SK-N-SH (cell line): ENCODE measurements at regions of chr6 and their contacts with region 1.

Region 1: DNA sequence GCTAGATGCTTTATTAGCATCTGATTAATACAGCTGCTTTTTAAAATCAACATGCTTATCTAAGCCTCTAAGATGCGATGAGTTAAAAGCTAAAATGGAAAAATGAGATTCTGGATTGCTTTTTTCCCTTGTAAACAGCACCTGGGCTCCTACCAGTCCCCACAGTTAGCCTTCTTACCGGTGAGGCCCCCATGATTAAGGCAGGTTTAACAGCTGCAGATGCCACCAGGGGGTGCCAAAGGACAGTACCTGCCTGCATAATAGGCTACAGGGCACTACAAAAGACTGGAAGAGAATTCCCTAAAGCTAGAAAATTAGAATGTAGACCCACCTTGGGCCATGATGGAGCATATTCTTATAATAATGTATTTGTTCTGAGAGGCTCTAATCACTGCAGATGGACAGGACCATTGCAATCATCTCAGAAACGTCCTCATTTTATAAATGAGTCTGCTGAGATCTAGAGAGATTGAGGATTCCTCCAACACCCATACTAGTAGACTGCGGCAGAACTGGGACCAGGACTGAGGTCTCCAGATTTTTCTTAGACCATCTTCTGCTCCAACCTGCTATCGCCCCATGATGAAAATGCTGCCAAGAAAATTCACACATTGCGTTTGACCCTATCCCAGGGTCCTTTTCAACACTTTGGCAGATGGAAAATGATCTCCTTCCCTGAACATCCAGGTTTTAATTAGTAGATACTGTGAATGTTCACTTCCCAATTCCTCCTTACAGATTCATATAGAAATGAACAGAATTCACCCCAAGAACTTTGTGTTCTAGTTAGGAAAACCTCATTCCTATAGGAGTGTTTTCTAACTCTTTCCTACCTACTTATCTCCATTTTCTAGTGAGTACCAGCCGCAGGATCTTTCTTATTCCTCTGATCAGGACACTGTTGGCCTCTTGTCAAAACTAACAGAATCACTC is 148.8 kb downstream of the RPS12 start:
- DNase-seq: peak; percentile 51
- H3K4me3 ChIP-seq: no peak overlapping the region
- H3K27ac ChIP-seq: peak overlapping the region in 1 of 2 experiments; percentile 73; a peak in 2 of 4 replicates
- H3K4me1 ChIP-seq: peaks cover 0 to 13% of the 10 kb centered on the region in 2 experiments; a peak in 2 of 4 replicates
- H3K27me3 ChIP-seq: no peaks in the 10 kb centered on the region
- CTCF ChIP-seq: peak; percentile 84
- EP300 ChIP-seq: no peak
- RAD21 ChIP-seq: peak; percentile 90

Region 2: DNA sequence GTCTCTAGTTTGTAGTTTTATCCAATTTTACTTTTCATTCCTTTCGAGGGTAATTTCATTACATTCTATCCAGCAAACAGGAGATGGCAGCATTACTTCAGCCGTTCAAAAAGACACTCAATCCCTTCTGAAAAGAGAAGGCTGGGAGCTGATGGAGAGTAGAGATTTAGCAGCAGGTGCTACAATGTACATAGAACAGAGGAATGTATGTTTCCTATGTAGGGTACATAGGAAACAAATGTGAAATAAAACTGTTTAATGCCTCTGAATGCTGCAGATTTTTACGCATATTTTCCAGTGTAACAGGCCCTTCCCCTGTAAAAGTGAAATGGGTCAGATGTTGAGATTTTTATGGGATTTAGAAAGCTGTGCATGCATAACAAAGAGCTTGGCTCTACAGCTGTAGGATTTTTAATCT is 132.9 kb before region 1 on chr6:
- CTCF ChIA-PET with region 1: interaction called, 38 read pairs
- POLR2A ChIA-PET with region 1: no interaction called
- DNase-seq: peak; percentile 57
- H3K4me3 ChIP-seq: no peak overlapping the region; a peak in 1 of 4 replicates
- H3K27ac ChIP-seq: no peak overlapping the region
- H3K4me1 ChIP-seq: no peaks in the 10 kb centered on the region; a peak in 1 of 4 replicates
- H3K27me3 ChIP-seq: no peaks in the 10 kb centered on the region
- CTCF ChIP-seq: peak; percentile 63
- EP300 ChIP-seq: no peak
- RAD21 ChIP-seq: peak; percentile 94

Region 3: DNA sequence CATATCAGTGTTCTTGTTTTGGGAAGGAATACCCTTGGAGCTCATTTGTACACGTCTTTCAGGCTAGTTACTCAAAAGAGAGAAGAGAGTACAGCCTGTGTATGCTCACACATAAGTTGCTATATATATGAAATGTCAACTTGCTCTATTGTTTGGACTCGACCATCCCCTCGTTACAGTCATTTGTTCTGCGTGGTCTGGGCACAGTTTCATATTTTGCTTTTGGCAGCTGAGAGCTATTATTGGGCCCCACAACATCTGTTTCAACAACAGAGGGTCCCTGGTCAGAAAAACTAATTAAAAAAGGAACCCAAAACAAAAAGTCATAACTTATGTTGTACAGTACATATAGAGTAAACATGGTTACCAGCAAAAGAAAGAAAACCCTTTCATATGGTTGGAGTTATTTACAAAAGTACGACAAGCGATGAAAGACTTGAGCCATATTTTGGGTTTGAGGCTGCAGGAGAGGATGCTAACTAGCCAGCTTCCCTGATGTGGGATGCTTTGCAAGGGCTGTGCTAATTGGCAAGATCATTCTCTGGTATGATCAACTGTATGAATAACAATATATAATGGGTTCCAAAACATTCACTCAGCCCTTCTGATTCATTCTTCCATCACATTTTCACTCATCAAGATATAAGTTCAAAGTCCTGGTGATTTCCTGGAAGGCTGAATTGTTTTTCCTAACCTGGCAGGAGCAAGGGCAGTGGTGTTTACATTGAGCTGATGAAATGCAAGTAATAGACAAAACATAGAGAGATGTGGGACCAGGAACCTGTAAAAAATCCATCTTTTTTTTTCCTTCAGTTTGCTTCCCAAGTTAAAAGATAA is 11.0 kb before region 1 on chr6:
- CTCF ChIA-PET with region 1: interaction called, 16 read pairs
- POLR2A ChIA-PET with region 1: no interaction called
- DNase-seq: no peak
- H3K4me3 ChIP-seq: no peak overlapping the region
- H3K27ac ChIP-seq: no peak overlapping the region
- H3K4me1 ChIP-seq: no peaks in the 10 kb centered on the region
- H3K27me3 ChIP-seq: no peaks in the 10 kb centered on the region
- CTCF ChIP-seq: no peak
- EP300 ChIP-seq: no peak
- RAD21 ChIP-seq: no peak

Region 4: DNA sequence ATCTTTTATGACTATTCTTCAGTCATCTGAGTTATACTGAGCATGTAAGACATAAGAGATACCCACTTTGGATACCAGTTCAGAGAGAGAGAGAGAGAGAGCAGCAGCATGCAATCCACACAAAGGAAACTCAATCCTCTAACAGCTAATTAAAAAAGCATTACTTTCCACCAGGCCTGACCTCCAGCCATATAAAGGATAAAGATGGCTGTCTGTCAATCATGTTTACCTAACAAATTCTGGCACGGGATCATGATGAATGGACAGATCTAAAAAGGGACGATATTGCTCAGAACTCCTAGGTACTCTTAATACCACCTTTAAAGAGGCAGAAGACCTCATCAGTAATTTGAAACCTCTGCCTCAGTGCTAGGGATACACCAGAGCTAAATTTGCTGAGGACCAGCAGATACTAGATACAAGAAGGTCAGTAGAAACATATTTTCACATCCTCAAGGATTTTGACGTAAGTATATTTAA is 10.4 kb after region 1 on chr6:
- CTCF ChIA-PET with region 1: interaction called, 23 read pairs
- POLR2A ChIA-PET with region 1: no interaction called
- DNase-seq: peak; percentile 3
- H3K4me3 ChIP-seq: no peak overlapping the region
- H3K27ac ChIP-seq: no peak overlapping the region
- H3K4me1 ChIP-seq: peaks cover 0 to 2% of the 10 kb centered on the region in 2 experiments; a peak in 2 of 4 replicates
- H3K27me3 ChIP-seq: no peaks in the 10 kb centered on the region
- CTCF ChIP-seq: no peak
- EP300 ChIP-seq: no peak
- RAD21 ChIP-seq: no peak

Region 5: DNA sequence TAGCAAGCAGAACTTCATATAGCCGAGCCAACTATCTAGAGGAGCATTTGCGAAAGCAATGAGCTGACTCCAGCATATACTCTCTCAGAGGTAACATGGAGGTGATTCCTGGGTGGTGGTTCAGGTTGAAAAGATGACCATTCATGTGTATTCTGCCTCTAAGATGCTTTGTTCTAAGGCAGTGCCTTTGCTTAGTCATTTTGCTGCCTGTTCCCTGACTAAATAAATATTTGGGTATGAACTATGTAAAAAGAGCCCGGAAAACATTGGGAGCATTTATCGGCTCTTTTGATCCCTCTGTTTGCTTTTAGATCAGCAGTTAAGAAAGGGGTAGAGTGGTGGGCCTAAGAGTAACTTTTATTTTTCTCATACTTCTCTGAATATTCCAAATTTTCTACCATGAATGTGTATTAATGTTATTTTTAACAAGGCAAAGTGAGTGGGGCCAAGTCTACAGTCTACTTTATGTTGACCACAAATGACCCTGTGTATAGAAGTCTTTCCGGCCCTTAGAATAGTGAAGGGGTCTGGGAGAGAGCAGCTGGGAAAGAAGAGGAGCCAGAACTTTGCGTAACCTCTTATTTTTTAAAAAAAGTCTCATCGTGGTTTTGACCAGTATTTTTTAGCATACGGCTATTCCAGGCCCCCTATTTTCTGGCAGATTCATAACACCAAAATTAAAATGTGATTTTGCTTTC is 71.5 kb after region 1 on chr6:
- CTCF ChIA-PET with region 1: no interaction called
- POLR2A ChIA-PET with region 1: no interaction called
- DNase-seq: no peak
- H3K4me3 ChIP-seq: no peak overlapping the region
- H3K27ac ChIP-seq: no peak overlapping the region
- H3K4me1 ChIP-seq: no peaks in the 10 kb centered on the region
- H3K27me3 ChIP-seq: no peaks in the 10 kb centered on the region
- CTCF ChIP-seq: no peak
- EP300 ChIP-seq: no peak
- RAD21 ChIP-seq: no peak

Region 6: GRCh38 chr6:133070410-133071043 is 107.3 kb after region 1 on chr6:
- CTCF ChIA-PET with region 1: no interaction called
- POLR2A ChIA-PET with region 1: no interaction called
- DNase-seq: no peak
- H3K4me3 ChIP-seq: no peak overlapping the region
- H3K27ac ChIP-seq: no peak overlapping the region
- H3K4me1 ChIP-seq: no peaks in the 10 kb centered on the region
- H3K27me3 ChIP-seq: no peaks in the 10 kb centered on the region
- CTCF ChIP-seq: no peak
- EP300 ChIP-seq: no peak
- RAD21 ChIP-seq: no peak

Region 7: GRCh38 chr6:133184798-133185372 is 221.7 kb after region 1 on chr6:
- CTCF ChIA-PET with region 1: interaction called, 15 read pairs
- POLR2A ChIA-PET with region 1: no interaction called
- DNase-seq: no peak
- H3K4me3 ChIP-seq: no peak overlapping the region
- H3K27ac ChIP-seq: no peak overlapping the region
- H3K4me1 ChIP-seq: peaks cover 0 to 3% of the 10 kb centered on the region in 2 experiments; a peak in 2 of 4 replicates
- H3K27me3 ChIP-seq: no peaks in the 10 kb centered on the region
- CTCF ChIP-seq: peak; percentile 78
- EP300 ChIP-seq: no peak
- RAD21 ChIP-seq: peak; percentile 65

Region 8: GRCh38 chr6:133254552-133255228 is 291.5 kb after region 1 on chr6:
- CTCF ChIA-PET with region 1: no interaction called
- POLR2A ChIA-PET with region 1: no interaction called
- DNase-seq: no peak
- H3K4me3 ChIP-seq: no peak overlapping the region
- H3K27ac ChIP-seq: no peak overlapping the region
- H3K4me1 ChIP-seq: no peaks in the 10 kb centered on the region
- H3K27me3 ChIP-seq: no peaks in the 10 kb centered on the region
- CTCF ChIP-seq: no peak
- EP300 ChIP-seq: no peak
- RAD21 ChIP-seq: no peak

Region 9: DNA sequence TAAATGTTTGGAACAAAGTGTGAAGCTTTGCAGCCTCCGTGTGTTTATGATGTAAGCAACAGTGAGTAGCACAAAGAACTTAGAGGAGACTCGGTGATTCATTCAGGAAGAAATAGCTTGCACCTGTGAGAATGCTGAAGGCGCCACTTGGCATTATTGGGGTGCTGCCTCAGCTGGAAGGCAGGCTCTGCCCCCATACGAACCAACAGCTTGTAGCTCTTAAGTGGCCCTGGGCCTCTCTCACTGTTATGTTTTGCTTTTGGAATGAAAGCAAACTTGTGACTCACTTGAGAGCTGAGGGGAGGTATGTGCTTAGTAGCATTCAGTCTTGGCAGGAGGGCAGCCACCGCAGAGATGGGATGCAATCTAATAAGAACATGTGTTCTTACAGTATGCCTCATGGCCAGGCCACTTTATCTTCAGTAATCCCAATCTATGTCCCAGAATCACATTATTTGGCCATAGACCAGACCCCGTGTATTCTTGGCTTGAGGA is 588.7 kb after region 1 on chr6:
- CTCF ChIA-PET with region 1: interaction called, 10 read pairs
- POLR2A ChIA-PET with region 1: no interaction called
- DNase-seq: no peak
- H3K4me3 ChIP-seq: no peak overlapping the region
- H3K27ac ChIP-seq: no peak overlapping the region
- H3K4me1 ChIP-seq: 0 out of 4 replicates have a peak, but pooled peaks cover 0 to 5% of the 10 kb centered on the region in 2 experiments
- H3K27me3 ChIP-seq: no peaks in the 10 kb centered on the region
- CTCF ChIP-seq: no peak
- EP300 ChIP-seq: peak in 1 of 2 experiments; percentile 13; a peak in 1 of 4 replicates
- RAD21 ChIP-seq: no peak